ENCODE measurements at regions of chr17 and their contacts with region 1.

Region 1: GRCh38 chr17:66715745-66716156 is 119.2 kb upstream of the CACNG5 start:
- DNase-seq: peak; percentile 53
- ATAC-seq: peak; percentile 34
- H3K4me3 ChIP-seq: no peak overlapping the region
- H3K27ac ChIP-seq: no peak overlapping the region
- H3K4me1 ChIP-seq: peaks cover 26% of the 10 kb centered on the region
- H3K27me3 ChIP-seq: no peaks in the 10 kb centered on the region
- CTCF ChIP-seq: peak; percentile 61 to 87 (median 84)
- EP300 ChIP-seq: no peak
- POLR2A ChIP-seq: no peak
- RAD21 ChIP-seq: peak; percentile 89

Region 2: GRCh38 chr17:66567234-66568170 is 148.2 kb before region 1 on chr17:
- CTCF ChIA-PET with region 1: interaction called, 4 read pairs
- POLR2A ChIA-PET with region 1: no interaction called
- RAD21 ChIA-PET with region 1: interaction called, 13 read pairs
- SMC1A ChIA-PET with region 1: interaction called, 3 read pairs
- in situ Hi-C with region 1: no loop called
- intact Hi-C with region 1: no loop called
- DNase-seq: peak; percentile 23
- ATAC-seq: peak; percentile 98
- H3K4me3 ChIP-seq: no peak overlapping the region
- H3K27ac ChIP-seq: no peak overlapping the region
- H3K4me1 ChIP-seq: no peaks in the 10 kb centered on the region
- H3K27me3 ChIP-seq: no peaks in the 10 kb centered on the region
- CTCF ChIP-seq: peak; percentile 87
- EP300 ChIP-seq: no peak
- POLR2A ChIP-seq: no peak
- RAD21 ChIP-seq: peak; percentile 93

Region 3: GRCh38 chr17:66593116-66593515 is 122.6 kb before region 1 on chr17:
- CTCF ChIA-PET with region 1: no interaction called
- POLR2A ChIA-PET with region 1: no interaction called
- RAD21 ChIA-PET with region 1: no interaction called
- SMC1A ChIA-PET with region 1: no interaction called
- in situ Hi-C with region 1: no loop called
- intact Hi-C with region 1: no loop called
- DNase-seq: no peak
- ATAC-seq: no peak
- H3K4me3 ChIP-seq: no peak overlapping the region
- H3K27ac ChIP-seq: no peak overlapping the region
- H3K4me1 ChIP-seq: no peaks in the 10 kb centered on the region
- H3K27me3 ChIP-seq: no peaks in the 10 kb centered on the region
- CTCF ChIP-seq: no peak
- EP300 ChIP-seq: no peak
- POLR2A ChIP-seq: no peak
- RAD21 ChIP-seq: no peak

Region 4: DNA sequence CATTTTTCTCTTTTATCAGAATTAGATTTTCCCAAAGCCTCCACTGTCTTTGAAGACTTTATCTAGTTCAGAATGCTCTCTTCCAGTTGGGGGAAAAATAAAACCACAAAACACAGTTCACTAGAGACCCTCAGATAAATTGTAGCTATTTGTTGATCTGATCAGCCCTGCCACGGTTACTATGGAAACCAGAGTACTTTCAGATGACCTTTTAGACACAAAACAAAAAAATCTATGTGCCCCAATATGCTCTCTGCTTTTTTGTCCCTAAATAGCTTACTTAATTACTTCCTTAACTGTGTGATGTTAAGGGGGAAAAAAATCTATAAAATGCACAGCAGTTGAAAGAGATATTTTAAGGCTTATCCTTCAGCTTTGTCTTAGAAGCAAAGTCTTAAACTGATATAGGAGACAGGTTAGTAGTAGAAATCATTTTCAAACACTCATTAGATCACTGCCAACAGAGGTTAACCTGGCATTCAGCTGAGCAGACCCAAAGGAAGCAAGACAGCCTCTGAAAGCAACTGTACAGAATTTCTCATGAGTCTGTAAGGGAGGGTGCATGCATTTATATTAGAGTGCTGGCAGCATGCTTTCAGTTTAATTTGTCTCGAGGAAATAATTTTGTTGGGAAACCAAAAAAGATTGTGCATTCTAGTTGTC is 10.8 kb before region 1 on chr17:
- CTCF ChIA-PET with region 1: interaction called, 33 read pairs
- POLR2A ChIA-PET with region 1: interaction called, 23 read pairs
- RAD21 ChIA-PET with region 1: interaction called, 69 read pairs
- SMC1A ChIA-PET with region 1: interaction called, 53 read pairs
- in situ Hi-C with region 1: no loop called
- intact Hi-C with region 1: loop called (anchors 1 kb)
- DNase-seq: no peak
- ATAC-seq: peak; percentile 43
- H3K4me3 ChIP-seq: no peak overlapping the region
- H3K27ac ChIP-seq: no peak overlapping the region
- H3K4me1 ChIP-seq: peaks cover 20% of the 10 kb centered on the region
- H3K27me3 ChIP-seq: no peaks in the 10 kb centered on the region
- CTCF ChIP-seq: no peak
- EP300 ChIP-seq: peak in 1 of 2 experiments; percentile 23; a peak in 1 of 4 replicates
- POLR2A ChIP-seq: no peak
- RAD21 ChIP-seq: no peak

Region 5: DNA sequence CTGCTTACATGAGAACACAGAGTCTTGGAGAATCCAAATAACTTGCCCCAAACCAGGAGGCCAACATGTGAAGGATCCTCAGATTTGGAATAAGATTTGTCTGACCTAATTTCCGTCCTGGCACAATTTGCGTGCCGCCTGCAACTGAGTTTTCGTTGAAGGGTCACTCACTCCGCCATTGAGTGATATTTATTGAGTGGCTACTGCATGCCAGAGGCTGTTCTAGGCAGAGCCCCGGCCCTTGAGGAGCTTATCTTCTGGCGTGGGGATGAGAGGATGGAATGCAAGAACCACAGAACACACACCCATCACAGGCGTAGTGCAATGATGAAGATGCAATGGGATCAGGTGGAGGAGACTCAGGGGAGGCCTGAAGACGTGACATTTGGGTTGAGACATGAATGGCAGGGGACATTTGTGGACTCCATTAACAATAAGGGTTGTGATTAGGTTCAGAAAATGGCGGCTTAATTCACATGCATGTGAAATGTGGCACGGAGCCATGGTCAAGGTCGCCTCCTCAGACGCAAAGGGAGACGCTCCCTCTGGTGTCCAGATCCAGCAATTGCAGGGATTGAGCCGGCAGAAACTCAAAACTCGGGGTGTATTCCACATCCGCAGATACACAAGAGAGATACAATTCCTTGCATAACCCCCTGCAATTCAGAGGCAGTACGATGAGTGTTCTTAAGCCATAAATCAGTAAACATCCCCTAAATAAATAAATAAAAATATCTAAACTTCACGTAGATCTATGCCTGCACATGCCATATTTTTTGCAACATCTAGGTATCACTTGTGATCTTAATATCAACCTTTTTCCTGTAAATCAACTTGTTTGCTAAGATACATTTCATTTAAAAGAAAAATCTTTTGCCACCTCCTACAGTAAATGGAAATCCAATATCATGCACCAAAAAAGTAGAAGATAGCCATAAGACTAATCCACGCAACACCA is 190.8 kb after region 1 on chr17:
- CTCF ChIA-PET with region 1: interaction called, 16 read pairs
- POLR2A ChIA-PET with region 1: interaction called, 6 read pairs
- RAD21 ChIA-PET with region 1: interaction called, 5 read pairs
- SMC1A ChIA-PET with region 1: interaction called, 13 read pairs
- in situ Hi-C with region 1: loop called (anchors 5 kb)
- intact Hi-C with region 1: loop called (anchors 1 kb)
- DNase-seq: peak; percentile 25
- ATAC-seq: peak; percentile 83
- H3K4me3 ChIP-seq: no peak overlapping the region
- H3K27ac ChIP-seq: no peak overlapping the region
- H3K4me1 ChIP-seq: no peaks in the 10 kb centered on the region
- H3K27me3 ChIP-seq: no peaks in the 10 kb centered on the region; a peak in 1 of 4 replicates
- CTCF ChIP-seq: peak; percentile 83 to 92 (median 87)
- EP300 ChIP-seq: no peak
- POLR2A ChIP-seq: no peak
- RAD21 ChIP-seq: peak; percentile 77

Region 6: GRCh38 chr17:67293251-67294203 is 577.8 kb after region 1 on chr17:
- CTCF ChIA-PET with region 1: interaction called, 5 read pairs
- POLR2A ChIA-PET with region 1: no interaction called
- RAD21 ChIA-PET with region 1: no interaction called
- SMC1A ChIA-PET with region 1: interaction called, 5 read pairs
- in situ Hi-C with region 1: loop called (anchors 10 kb)
- intact Hi-C with region 1: loop called (anchors 5 kb)
- DNase-seq: peak; percentile 4
- ATAC-seq: peak; percentile 100
- H3K4me3 ChIP-seq: no peak overlapping the region
- H3K27ac ChIP-seq: no peak overlapping the region
- H3K4me1 ChIP-seq: no peaks in the 10 kb centered on the region
- H3K27me3 ChIP-seq: no peaks in the 10 kb centered on the region
- CTCF ChIP-seq: peak; percentile 76 to 93 (median 83)
- EP300 ChIP-seq: no peak
- POLR2A ChIP-seq: no peak
- RAD21 ChIP-seq: peak; percentile 77

Region 7: DNA sequence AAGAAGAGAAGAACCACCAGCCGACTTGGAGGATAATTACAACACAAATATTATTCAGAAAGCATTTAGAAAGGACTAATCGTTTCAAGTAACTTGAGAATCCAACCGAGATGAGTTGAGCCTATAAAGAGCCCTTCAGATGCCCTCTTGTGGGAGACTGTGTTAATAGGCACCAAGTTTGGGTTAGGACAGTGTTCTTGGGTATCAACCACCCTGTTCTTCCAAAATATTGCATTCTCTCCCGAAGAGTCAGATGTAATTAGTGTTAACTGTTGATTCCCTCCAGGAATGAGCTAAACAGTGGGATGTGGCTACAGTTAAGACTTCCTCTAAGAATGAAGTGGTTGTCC is 914.2 kb after region 1 on chr17:
- CTCF ChIA-PET with region 1: no interaction called
- POLR2A ChIA-PET with region 1: no interaction called
- RAD21 ChIA-PET with region 1: no interaction called
- SMC1A ChIA-PET with region 1: no interaction called
- in situ Hi-C with region 1: loop called (anchors 25 kb)
- intact Hi-C with region 1: no loop called
- DNase-seq: no peak
- ATAC-seq: peak; percentile 72
- H3K4me3 ChIP-seq: no peak overlapping the region
- H3K27ac ChIP-seq: no peak overlapping the region; the same call in 1 of the 2 replicates
- H3K4me1 ChIP-seq: peaks cover 15% of the 10 kb centered on the region
- H3K27me3 ChIP-seq: no peaks in the 10 kb centered on the region
- CTCF ChIP-seq: peak; percentile 47 to 53 (median 52); a peak in 4 of 6 replicates
- EP300 ChIP-seq: no peak
- POLR2A ChIP-seq: no peak
- RAD21 ChIP-seq: peak; percentile 68